B cell (primary cell): ENCODE measurements at regions of chr9 and their contacts with region 1.

Region 1: GRCh38 chr9:34252670-34253459 is 74.0 kb downstream of the UBAP1 start:
- DNase-seq: peak; percentile 75
- ATAC-seq: peak; percentile 61
- H3K4me3 ChIP-seq: no peak overlapping the region
- H3K4me3 Mint-ChIP-seq: no peak overlapping the region
- H3K27ac ChIP-seq: no peak overlapping the region
- H3K27ac Mint-ChIP-seq: no peak overlapping the region
- H3K4me1 ChIP-seq: peaks cover 0 to 15% of the 10 kb centered on the region in 2 donors
- H3K4me1 Mint-ChIP-seq: peaks cover 13% of the 10 kb centered on the region
- H3K27me3 ChIP-seq: no peaks in the 10 kb centered on the region
- H3K27me3 Mint-ChIP-seq: no peaks in the 10 kb centered on the region
- CTCF ChIP-seq: peak; percentile 91

Region 2: GRCh38 chr9:34010979-34011378 is 241.9 kb before region 1 on chr9:
- CTCF ChIA-PET with region 1: interaction called, 41 read pairs
- POLR2A ChIA-PET with region 1: no interaction called
- intact Hi-C with region 1: no loop called
- DNase-seq: peak; percentile 50
- ATAC-seq: no peak
- H3K4me3 ChIP-seq: no peak overlapping the region
- H3K4me3 Mint-ChIP-seq: no peak overlapping the region
- H3K27ac ChIP-seq: no peak overlapping the region
- H3K27ac Mint-ChIP-seq: no peak overlapping the region
- H3K4me1 ChIP-seq: no peaks in the 10 kb centered on the region
- H3K4me1 Mint-ChIP-seq: no peaks in the 10 kb centered on the region
- H3K27me3 ChIP-seq: no peaks in the 10 kb centered on the region
- H3K27me3 Mint-ChIP-seq: no peaks in the 10 kb centered on the region
- CTCF ChIP-seq: peak; percentile 74

Region 3: DNA sequence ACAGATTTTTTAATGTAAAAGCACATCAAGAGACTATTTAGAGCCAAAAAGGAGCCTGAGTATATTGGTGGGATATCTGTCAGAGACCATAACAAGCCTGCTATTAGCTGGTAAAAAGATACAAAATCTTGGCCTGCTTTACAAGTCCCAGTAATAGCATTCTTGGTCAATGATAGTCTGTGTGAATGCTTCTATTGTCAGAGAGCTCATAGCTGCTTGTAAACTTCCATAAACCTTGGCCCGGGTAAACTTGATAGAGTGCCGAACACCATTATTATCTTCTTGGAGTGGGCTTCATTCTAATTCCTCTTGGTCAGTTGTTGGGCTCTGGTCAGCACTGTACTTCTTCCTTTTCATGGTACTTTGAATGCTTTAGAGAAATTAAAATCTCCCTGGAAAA is 10.0 kb before region 1 on chr9:
- CTCF ChIA-PET with region 1: interaction called, 18 read pairs
- POLR2A ChIA-PET with region 1: no interaction called
- intact Hi-C with region 1: no loop called
- DNase-seq: no peak
- ATAC-seq: no peak
- H3K4me3 ChIP-seq: no peak overlapping the region
- H3K4me3 Mint-ChIP-seq: no peak overlapping the region
- H3K27ac ChIP-seq: no peak overlapping the region
- H3K27ac Mint-ChIP-seq: no peak overlapping the region
- H3K4me1 ChIP-seq: no peaks in the 10 kb centered on the region
- H3K4me1 Mint-ChIP-seq: no peaks in the 10 kb centered on the region
- H3K27me3 ChIP-seq: no peaks in the 10 kb centered on the region
- H3K27me3 Mint-ChIP-seq: no peaks in the 10 kb centered on the region
- CTCF ChIP-seq: no peak

Region 4: GRCh38 chr9:34540828-34541227 is 288.0 kb after region 1 on chr9:
- CTCF ChIA-PET with region 1: no interaction called
- POLR2A ChIA-PET with region 1: no interaction called
- intact Hi-C with region 1: no loop called
- DNase-seq: no peak
- ATAC-seq: no peak
- H3K4me3 ChIP-seq: no peak overlapping the region
- H3K4me3 Mint-ChIP-seq: no peak overlapping the region
- H3K27ac ChIP-seq: no peak overlapping the region
- H3K27ac Mint-ChIP-seq: no peak overlapping the region
- H3K4me1 ChIP-seq: no peaks in the 10 kb centered on the region
- H3K4me1 Mint-ChIP-seq: no peaks in the 10 kb centered on the region
- H3K27me3 ChIP-seq: peaks cover 0 to 9% (median 0%) of the 10 kb centered on the region in 4 experiments
- H3K27me3 Mint-ChIP-seq: peaks cover 27% of the 10 kb centered on the region
- CTCF ChIP-seq: no peak